Right ventricle myocardium inferior (tissue), 1 donor: ENCODE measurements at regions of chr2 and their contacts with region 1.

Region 1: GRCh38 chr2:148509288-148509902 is 135.2 kb upstream of the EPC2 start:
- DNase-seq: peak; percentile 84
- ATAC-seq: peak; percentile 97

Region 2: GRCh38 chr2:147937744-147938349 is 571.5 kb before region 1 on chr2:
- intact Hi-C with region 1: loop called (anchors 5 kb)
- DNase-seq: no peak
- ATAC-seq: peak; percentile 57

Region 3: GRCh38 chr2:147989809-147990403 is 519.5 kb before region 1 on chr2:
- intact Hi-C with region 1: loop called (anchors 2 kb)
- DNase-seq: no peak
- ATAC-seq: no peak